ENCODE measurements at regions of chr11 and their contacts with region 1.

Region 1: DNA sequence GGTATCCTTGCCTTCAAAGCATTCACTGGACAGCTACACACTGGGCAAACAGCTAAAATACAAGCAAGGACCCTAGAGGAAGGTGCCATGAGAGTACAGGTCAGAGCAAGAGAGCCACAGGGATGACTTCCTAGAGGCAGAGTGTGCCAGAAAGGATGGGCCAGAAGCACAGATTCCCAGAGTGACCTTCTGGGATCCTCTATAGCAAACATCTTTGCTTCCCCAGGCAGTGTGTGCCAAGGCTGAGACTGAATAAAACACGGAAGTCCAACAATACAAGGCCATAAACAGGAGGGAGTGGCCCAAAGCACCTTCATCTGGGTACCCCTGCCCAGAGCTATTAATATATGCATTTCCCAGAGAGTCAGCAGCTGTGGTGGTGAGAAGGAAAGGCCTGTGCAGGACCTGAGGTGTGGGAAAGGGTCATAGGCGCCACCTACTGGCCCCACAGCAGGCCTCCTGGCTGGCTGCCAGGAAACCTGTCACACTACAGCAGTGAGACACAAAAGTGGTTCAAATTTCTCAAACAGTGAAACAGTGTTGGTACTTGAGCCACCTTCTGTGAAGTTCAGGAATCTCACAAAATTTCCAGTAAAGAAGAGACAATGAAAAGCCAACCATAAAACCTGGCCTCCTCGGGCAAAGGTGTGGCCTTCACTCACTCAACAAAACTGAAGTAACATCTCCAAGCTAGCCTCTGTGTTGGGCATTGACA is 20.3 kb downstream of the CLPB start:
- DNase-seq: peak; percentile 78
- ATAC-seq: peak; percentile 65
- H3K4me3 Mint-ChIP-seq: no peak overlapping the region
- H3K27ac Mint-ChIP-seq: peak overlapping the region; percentile 18; the same call in 1 of the 2 replicates
- H3K4me1 Mint-ChIP-seq: peaks cover 60% of the 10 kb centered on the region
- H3K27me3 Mint-ChIP-seq: no peaks in the 10 kb centered on the region
- CTCF ChIP-seq: peak; percentile 58

Region 2: DNA sequence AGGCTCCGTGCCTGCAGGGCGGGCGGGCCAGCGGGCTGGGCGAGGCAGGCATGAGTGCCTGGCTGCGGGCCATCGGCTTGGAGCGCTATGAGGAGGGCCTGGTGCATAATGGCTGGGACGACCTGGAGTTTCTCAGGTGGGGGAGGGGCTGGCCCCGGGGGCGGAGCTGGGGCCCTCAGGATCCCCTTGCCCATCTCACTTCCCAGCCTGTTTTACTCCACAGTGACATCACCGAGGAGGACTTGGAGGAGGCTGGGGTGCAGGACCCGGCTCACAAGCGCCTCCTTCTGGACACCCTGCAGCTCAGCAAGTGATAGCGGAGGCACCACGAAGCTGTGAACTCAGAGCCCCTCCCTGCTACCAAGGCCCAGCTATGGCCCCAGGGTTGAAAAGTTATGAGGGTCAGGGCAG is 176.0 kb before region 1 on chr11:
- CTCF ChIA-PET with region 1: interaction called, 18 read pairs
- POLR2A ChIA-PET with region 1: no interaction called
- DNase-seq: peak; percentile 94
- ATAC-seq: peak; percentile 81
- H3K4me3 Mint-ChIP-seq: peak overlapping the region; percentile 73
- H3K27ac Mint-ChIP-seq: no peak overlapping the region
- H3K4me1 Mint-ChIP-seq: peaks cover 31% of the 10 kb centered on the region
- H3K27me3 Mint-ChIP-seq: peaks cover 46% of the 10 kb centered on the region
- CTCF ChIP-seq: peak; percentile 84

Region 3: GRCh38 chr11:72244361-72245262 is 169.5 kb before region 1 on chr11:
- CTCF ChIA-PET with region 1: interaction called, 18 read pairs
- POLR2A ChIA-PET with region 1: no interaction called
- DNase-seq: peak; percentile 69
- ATAC-seq: peak; percentile 29
- H3K4me3 Mint-ChIP-seq: no peak overlapping the region
- H3K27ac Mint-ChIP-seq: no peak overlapping the region
- H3K4me1 Mint-ChIP-seq: peaks cover 30% of the 10 kb centered on the region
- H3K27me3 Mint-ChIP-seq: peaks cover 43% of the 10 kb centered on the region
- CTCF ChIP-seq: no peak

Region 4: GRCh38 chr11:72328366-72329224 is 85.5 kb before region 1 on chr11:
- CTCF ChIA-PET with region 1: interaction called, 38 read pairs
- POLR2A ChIA-PET with region 1: no interaction called
- DNase-seq: no peak
- ATAC-seq: peak; percentile 43; the same call in 1 of the 2 replicates
- H3K4me3 Mint-ChIP-seq: no peak overlapping the region
- H3K27ac Mint-ChIP-seq: no peak overlapping the region
- H3K4me1 Mint-ChIP-seq: peaks cover 5% of the 10 kb centered on the region
- H3K27me3 Mint-ChIP-seq: no peaks in the 10 kb centered on the region
- CTCF ChIP-seq: no peak

Region 5: DNA sequence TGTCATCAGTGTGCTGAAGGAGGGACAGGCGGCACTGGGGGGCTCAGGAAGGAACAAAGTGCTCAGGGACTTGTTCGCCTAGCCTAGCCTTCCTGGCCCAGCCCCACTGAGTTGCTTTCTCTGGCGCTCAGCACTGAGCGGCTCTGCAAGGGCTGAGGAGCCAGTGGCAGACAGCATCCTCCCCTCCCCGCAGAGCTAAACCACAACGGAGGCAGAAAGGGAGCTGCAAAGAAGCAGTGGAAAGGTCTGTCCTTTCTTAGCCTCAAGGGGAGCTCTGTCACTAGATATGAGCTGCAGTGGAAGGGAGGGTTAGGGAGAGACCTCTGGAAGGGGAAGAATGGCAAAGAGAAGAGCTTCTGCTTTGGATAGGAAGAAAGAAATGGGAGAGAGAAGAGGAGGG is 80.4 kb before region 1 on chr11:
- CTCF ChIA-PET with region 1: interaction called, 38 read pairs
- POLR2A ChIA-PET with region 1: no interaction called
- DNase-seq: peak; percentile 69
- ATAC-seq: peak; percentile 99
- H3K4me3 Mint-ChIP-seq: no peak overlapping the region
- H3K27ac Mint-ChIP-seq: peak overlapping the region; percentile 43; the same call in 1 of the 2 replicates
- H3K4me1 Mint-ChIP-seq: peaks cover 13% of the 10 kb centered on the region
- H3K27me3 Mint-ChIP-seq: no peaks in the 10 kb centered on the region
- CTCF ChIP-seq: no peak

Region 6: DNA sequence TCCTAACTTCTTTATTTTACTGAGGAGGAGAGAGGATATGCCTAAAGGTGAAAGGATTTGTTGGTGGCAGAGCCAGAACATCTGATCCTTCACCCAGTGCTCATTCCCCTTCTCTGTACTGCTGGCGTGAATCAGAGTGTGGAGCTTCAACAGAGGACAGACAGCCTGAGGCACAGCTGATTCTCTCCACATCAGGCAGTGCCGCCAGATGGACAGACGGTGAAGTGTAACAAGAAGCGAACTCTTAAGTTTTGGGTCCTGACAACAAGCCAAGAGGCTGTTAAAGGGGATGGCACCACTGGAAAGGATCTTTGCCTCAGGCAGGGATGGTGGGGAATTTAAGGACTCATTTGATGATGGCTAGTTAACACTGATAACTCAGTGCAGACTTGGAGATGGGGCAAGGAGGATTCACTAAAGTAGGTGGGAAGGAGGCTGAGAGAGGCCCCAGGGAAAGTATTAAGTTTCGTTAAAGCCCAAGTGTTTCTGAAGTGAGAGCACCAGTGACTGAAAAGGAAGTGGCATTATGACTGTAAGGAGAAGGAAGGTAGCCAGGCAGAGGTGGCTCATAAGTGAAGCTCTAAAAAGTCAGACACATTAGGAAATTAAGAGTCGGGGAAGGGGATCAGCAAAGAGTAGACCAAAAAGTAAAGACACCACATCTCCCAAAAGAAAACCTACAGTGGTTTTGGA is 61.1 kb before region 1 on chr11:
- CTCF ChIA-PET with region 1: interaction called, 55 read pairs
- POLR2A ChIA-PET with region 1: no interaction called
- DNase-seq: peak; percentile 47
- ATAC-seq: peak; percentile 79
- H3K4me3 Mint-ChIP-seq: no peak overlapping the region
- H3K27ac Mint-ChIP-seq: no peak overlapping the region
- H3K4me1 Mint-ChIP-seq: peaks cover 5% of the 10 kb centered on the region
- H3K27me3 Mint-ChIP-seq: no peaks in the 10 kb centered on the region
- CTCF ChIP-seq: no peak

Region 7: GRCh38 chr11:72398058-72398758 is 15.9 kb before region 1 on chr11:
- CTCF ChIA-PET with region 1: interaction called, 10 read pairs
- POLR2A ChIA-PET with region 1: interaction called, 3 read pairs
- DNase-seq: no peak
- ATAC-seq: no peak
- H3K4me3 Mint-ChIP-seq: no peak overlapping the region
- H3K27ac Mint-ChIP-seq: no peak overlapping the region; the same call in 1 of the 2 replicates
- H3K4me1 Mint-ChIP-seq: peaks cover 7% of the 10 kb centered on the region; the same call in 1 of the 2 replicates
- H3K27me3 Mint-ChIP-seq: no peaks in the 10 kb centered on the region
- CTCF ChIP-seq: no peak

Measured in WTC11 (cell line).